ENCODE measurements at regions of chr5 and their contacts with region 1.

Region 1: DNA sequence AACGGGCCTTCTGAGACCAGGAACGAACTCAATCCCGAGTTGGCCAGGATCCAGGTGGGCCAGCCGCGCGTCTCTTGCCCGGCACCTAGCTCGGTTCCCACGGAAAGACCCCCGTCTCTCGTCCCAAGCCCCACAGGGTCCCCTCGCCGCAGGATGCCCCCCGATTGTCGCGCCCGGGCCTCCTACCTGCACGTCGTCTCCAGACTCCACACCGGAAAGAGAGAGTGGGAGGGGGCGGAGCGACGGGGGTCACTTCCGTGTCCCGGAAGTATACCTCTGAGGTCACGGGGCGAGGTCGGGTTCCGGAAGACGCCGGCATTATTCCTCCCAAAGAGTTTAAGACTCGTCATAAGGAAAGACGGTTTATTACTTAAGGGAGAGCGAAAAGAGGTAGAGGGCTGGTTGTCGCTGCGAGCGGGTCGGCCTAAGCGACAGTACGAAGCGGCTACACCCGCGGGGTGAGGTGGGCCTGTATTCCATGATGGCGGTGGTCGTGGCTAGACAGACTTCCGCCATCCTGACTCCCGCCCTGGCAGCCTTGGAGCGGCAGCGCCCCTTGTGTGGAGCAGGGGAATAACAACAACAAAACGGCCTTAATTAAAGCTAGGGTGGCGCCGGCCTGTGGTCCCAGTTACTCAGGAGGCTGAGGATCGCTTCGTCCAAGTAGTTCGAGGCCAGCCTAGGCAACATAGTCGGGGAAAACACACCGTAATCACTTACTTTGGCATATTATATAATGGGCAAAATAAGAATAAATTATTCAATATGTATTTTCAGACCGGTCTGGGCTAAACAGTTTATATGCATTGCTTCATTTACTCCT is at the start of gene RPS14:
- DNase-seq: peak; percentile 96
- CTCF ChIP-seq: peak; percentile 94

Region 2: GRCh38 chr5:150409638-150410523 is 39.8 kb before region 1 on chr5:
- CTCF ChIA-PET with region 1: interaction called, 3 read pairs
- POLR2A ChIA-PET with region 1: interaction called, 24 read pairs
- DNase-seq: peak; percentile 67
- CTCF ChIP-seq: no peak

Region 3: GRCh38 chr5:150436141-150436680 is 13.5 kb before region 1 on chr5:
- CTCF ChIA-PET with region 1: interaction called, 26 read pairs
- POLR2A ChIA-PET with region 1: no interaction called
- DNase-seq: peak; percentile 89
- CTCF ChIP-seq: peak; percentile 79

Region 4: DNA sequence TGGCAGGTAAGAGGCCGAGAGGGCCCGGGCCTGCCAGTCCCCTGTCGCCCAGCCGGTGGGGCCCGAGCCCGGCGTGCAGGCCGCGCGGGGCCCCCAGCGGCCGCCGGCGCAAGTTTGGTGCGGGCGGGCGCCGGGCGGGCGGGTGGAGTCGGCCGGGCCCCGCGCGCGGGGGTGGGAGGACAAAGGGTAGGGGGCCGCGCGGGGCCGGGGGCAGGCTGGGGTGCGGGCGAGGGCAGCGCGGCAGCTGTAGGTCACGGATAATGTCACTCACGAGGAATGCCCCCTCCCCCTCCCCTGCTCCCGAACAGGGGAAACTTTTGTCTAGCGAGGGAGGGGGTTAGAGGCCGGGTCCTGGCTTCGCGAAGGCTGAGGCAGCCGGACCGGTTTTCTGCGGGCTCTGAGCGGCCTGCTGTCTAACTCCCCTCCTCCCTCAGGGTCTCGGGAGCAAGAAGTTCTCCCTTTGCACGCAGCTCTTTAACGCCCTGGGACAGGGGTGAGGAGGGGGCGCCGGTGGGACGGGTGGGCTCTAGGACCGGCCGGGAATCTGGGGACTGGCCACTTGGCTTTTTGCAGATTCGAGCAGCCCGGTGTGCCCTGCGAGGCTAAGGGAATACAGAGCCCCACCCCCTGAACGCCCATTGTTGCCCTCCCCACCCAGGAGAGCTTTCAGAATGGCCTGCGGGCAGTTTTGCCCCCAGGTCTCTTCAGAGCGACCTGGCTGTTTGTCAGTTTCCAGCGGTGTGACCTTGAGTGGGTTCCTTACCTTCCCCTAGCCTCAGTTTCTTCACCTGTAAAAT is 36.9 kb after region 1 on chr5:
- CTCF ChIA-PET with region 1: interaction called, 14 read pairs
- POLR2A ChIA-PET with region 1: interaction called, 4 read pairs
- DNase-seq: peak; percentile 60
- CTCF ChIP-seq: no peak

Region 5: GRCh38 chr5:150523472-150524350 is 74.0 kb after region 1 on chr5:
- CTCF ChIA-PET with region 1: interaction called, 15 read pairs
- POLR2A ChIA-PET with region 1: no interaction called
- DNase-seq: peak; percentile 75
- CTCF ChIP-seq: peak; percentile 44

Region 6: DNA sequence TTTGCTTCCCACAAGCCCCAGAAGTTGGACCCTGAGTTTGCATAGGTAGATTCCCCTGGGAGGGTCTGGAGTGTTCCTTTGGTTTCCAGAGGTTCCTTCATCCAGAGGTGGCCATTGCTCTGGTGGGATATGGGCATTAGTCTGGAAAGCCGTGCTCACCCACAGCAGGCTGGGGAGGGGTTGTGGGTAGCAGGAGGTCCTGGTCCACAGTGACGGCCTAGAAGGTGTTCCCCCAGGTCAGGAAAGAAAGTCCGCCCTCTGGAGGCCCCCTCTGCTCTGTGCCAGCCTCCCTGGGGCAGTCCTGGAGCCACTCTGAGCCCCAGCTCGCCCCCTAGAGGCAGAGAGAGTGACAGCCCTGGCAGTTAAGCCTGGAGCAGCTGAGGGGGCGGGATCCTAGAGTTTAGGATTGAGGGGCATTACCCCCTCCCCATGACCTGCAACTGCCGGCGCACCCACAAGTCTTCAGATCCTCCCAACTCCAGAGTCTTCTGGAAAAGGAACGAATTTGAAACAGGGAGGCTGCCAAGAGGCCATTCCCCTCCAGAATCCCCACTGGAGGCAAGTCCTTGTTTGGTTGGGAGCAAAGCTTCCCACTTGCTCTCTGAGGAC is 95.0 kb after region 1 on chr5:
- CTCF ChIA-PET with region 1: interaction called, 75 read pairs
- POLR2A ChIA-PET with region 1: no interaction called
- DNase-seq: peak; percentile 95
- CTCF ChIP-seq: peak; percentile 98

Measured in GM10248 (cell line).